ENCODE measurements at regions of chr17 and their contacts with region 1.

Region 1: DNA sequence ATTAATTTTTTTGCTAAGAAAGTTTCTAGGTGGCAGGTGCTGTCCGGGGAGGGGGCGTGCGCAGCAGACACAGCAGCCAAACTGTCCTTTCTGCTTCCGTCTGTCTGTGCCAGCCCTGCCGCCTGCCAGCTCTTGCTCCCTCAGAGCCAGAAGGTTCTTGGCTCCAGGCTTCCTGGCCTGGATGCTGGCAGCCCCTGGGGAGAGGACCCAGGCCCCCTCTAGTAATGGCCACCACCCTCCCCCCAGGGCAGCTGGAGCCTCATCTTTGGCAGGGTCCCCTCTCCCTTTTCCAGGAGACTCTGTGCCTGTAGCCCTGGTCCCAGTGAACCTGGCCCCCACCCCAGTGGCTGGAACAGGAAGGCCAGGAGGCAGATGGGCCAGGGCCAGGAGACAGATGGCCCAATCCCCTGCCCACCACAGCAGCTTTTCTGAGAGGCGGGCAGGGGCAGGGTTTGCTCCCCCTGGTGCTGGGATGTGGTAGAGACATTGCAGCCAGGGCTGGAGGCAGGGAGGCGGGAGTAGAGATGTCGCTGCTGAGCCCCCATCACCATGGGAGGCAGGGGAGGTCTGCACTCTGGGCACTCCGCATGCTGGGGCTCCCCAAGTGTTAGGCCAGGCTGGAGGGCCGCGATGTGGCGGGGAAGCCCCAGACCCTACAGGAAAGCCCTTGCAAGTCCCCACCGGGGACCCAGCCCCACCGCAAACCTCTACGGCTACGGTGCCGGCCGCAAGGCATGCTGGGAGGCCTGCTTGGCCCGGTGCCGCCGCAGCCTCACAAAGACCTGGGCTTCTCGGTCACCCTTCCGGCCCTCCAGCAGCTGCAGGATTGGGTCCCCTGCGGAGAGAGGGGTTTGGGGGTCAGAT is 16.7 kb downstream of the UNC13D start:
- DNase-seq: peak; percentile 91
- ATAC-seq: peak; percentile 74
- H3K4me3 Mint-ChIP-seq: peak overlapping the region; percentile 47
- H3K27ac Mint-ChIP-seq: peak overlapping the region; percentile 63; the same call in 1 of the 2 replicates
- H3K4me1 Mint-ChIP-seq: peaks cover 27% of the 10 kb centered on the region
- H3K27me3 Mint-ChIP-seq: no peaks in the 10 kb centered on the region
- CTCF ChIP-seq: peak; percentile 71

Region 2: DNA sequence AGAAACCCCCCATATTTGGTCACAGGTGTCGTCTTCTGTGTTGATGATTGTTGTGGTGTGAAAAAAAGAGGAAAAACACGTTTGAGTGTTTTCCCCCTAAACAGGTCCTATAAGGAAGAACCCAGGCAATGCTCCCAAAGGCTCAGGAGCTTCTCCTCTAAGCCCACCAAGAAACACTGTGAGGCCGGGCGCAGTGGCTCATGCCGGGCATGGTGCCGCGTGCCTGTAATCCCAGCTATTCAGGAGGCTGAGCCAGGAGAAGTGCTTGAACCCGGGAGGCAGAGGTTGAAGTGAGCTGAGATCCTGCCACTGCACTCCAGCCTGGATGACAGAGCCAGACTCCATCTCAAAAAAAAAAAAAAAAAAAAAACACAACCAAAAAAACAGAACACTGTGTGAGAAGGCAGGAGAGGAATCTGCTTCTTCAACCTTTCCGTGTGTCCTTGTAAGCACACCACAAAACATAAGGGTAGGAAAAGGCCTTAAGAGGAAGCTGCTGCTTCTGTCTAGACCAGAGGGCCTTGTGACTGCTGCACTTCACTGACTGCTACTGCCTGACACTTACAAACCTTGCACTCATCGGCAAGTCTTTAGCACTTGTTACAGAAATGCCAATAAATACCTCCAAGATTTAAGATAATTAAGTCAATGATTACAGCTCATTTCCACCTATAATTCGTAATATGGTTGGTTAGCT is 682.5 kb before region 1 on chr17:
- CTCF ChIA-PET with region 1: no interaction called
- POLR2A ChIA-PET with region 1: no interaction called
- DNase-seq: no peak
- ATAC-seq: no peak
- H3K4me3 Mint-ChIP-seq: no peak overlapping the region
- H3K27ac Mint-ChIP-seq: peak overlapping the region; percentile 60; the same call in 1 of the 2 replicates
- H3K4me1 Mint-ChIP-seq: peaks cover 4% of the 10 kb centered on the region
- H3K27me3 Mint-ChIP-seq: no peaks in the 10 kb centered on the region
- CTCF ChIP-seq: no peak

Region 3: DNA sequence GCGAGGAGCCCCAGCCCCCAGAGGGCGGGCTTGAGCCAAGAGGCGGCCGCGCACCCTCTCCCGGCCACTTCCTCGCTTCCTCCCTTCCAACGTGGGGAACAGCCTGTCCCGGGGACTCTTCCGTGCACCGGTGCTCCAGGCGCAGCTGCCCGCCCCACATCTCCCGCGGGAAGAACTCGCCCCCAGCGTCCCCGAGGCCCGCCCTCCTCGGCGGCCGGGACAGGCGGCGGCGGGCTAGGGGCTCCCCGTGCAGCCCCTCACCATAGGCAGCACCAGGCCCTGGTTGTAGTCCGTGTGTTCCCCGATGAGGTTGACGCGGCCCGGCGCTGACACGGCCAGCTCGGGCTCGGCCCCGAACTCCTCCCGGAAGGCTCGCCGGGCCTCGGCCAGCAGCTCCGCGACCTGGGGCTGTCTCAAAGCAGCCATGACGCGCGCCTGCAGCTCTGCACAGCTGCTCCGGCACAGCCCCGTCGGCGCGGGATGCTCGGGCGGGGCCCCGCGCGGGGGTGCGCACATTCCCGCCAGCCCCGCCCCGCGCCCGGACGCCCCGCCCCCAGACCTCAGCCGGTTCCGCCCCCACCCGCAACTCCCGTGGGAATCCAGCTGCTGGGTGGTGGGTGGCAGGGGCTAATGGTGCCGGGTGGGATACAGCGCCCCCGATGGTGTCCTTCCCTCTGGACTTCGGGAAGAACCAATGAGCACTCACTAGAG is 62.6 kb before region 1 on chr17 and contains the start of gene GALK1:
- CTCF ChIA-PET with region 1: interaction called, 38 read pairs
- POLR2A ChIA-PET with region 1: no interaction called
- DNase-seq: peak; percentile 67
- ATAC-seq: peak; percentile 76
- H3K4me3 Mint-ChIP-seq: peak within 1 kb of the TSS; percentile 75
- H3K27ac Mint-ChIP-seq: peak within 1 kb of the TSS; percentile 92
- H3K4me1 Mint-ChIP-seq: peaks cover 9% of the 10 kb centered on the region
- H3K27me3 Mint-ChIP-seq: no peaks in the 10 kb centered on the region
- CTCF ChIP-seq: no peak
- total RNA-seq, gene GALK1: 42.2 to 49.9 TPM (median 49.4 TPM) in 3 replicates

Region 4: GRCh38 chr17:75784473-75785015 is 42.9 kb before region 1 on chr17 and contains the start of gene UNK:
- CTCF ChIA-PET with region 1: interaction called, 27 read pairs
- POLR2A ChIA-PET with region 1: interaction called, 4 read pairs
- DNase-seq: peak; percentile 97
- ATAC-seq: peak; percentile 77
- H3K4me3 Mint-ChIP-seq: peak within 1 kb of the TSS; percentile 95
- H3K27ac Mint-ChIP-seq: peak within 1 kb of the TSS; percentile 100
- H3K4me1 Mint-ChIP-seq: peaks cover 34% of the 10 kb centered on the region
- H3K27me3 Mint-ChIP-seq: peaks cover 3% of the 10 kb centered on the region
- CTCF ChIP-seq: no peak
- total RNA-seq, gene UNK: 35.0 to 37.8 TPM (median 35.4 TPM) in 3 replicates

Region 5: GRCh38 chr17:75845049-75845860 is 17.8 kb after region 1 on chr17:
- CTCF ChIA-PET with region 1: interaction called, 180 read pairs
- POLR2A ChIA-PET with region 1: interaction called, 4 read pairs
- DNase-seq: peak; percentile 88
- ATAC-seq: peak; percentile 90
- H3K4me3 Mint-ChIP-seq: no peak overlapping the region
- H3K27ac Mint-ChIP-seq: peak overlapping the region; percentile 90
- H3K4me1 Mint-ChIP-seq: peaks cover 21% of the 10 kb centered on the region
- H3K27me3 Mint-ChIP-seq: no peaks in the 10 kb centered on the region
- CTCF ChIP-seq: peak; percentile 82

Region 6: DNA sequence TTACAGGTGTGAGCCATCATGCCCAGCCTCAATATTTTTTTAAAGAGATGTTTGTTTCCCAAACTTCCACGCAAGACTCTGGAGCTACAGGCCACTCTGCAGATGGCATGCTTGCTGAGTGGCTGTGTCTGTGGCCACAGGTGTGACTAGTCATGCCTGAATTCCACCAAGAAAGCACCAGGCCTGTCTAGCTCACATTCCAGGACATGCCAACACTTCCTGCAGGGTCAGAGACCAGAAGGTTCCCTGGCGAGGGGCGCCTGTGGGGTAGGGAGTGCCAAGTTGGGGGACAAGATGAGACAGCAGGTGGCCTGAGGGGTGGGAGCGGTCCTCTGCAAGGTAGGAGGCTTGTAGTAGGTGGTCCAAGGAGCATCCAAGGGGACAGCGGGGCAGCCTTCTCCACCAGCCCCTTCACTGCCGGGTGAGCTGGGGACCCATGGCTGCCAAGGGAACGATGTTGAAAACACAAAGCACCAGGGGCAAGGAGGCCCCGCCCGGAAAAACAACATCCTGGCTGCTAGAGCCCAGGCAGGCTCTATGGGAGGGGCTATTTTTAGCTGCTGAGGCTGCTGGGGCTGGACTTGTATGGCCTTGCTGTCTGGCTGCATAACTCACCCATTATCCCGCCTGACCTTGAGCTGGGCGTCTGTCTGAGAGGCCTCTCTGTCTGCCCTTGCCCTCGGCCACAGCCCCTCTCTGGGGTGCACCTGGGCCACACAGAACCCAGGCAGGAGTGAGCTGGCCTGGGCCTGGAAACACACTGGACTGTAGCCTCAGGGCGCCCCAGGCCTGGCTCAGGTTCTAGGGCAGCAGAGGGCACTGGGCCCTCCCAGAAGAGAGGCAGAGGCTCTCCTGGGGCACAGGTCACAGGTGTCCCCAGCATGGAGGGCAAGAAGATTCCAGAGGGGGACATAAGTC is 45.2 kb after region 1 on chr17:
- CTCF ChIA-PET with region 1: interaction called, 22 read pairs
- POLR2A ChIA-PET with region 1: no interaction called
- DNase-seq: no peak
- ATAC-seq: peak; percentile 12
- H3K4me3 Mint-ChIP-seq: no peak overlapping the region
- H3K27ac Mint-ChIP-seq: no peak overlapping the region
- H3K4me1 Mint-ChIP-seq: peaks cover 36% of the 10 kb centered on the region
- H3K27me3 Mint-ChIP-seq: peaks cover 14% of the 10 kb centered on the region
- CTCF ChIP-seq: no peak

Region 7: GRCh38 chr17:75904749-75905521 is 77.5 kb after region 1 on chr17 and contains the start of gene MRPL38:
- CTCF ChIA-PET with region 1: interaction called, 13 read pairs
- POLR2A ChIA-PET with region 1: no interaction called
- DNase-seq: peak; percentile 96
- ATAC-seq: peak; percentile 98
- H3K4me3 Mint-ChIP-seq: peak within 1 kb of the TSS; percentile 98
- H3K27ac Mint-ChIP-seq: peak within 1 kb of the TSS; percentile 95
- H3K4me1 Mint-ChIP-seq: peaks cover 3% of the 10 kb centered on the region; the same call in 1 of the 2 replicates
- H3K27me3 Mint-ChIP-seq: no peaks in the 10 kb centered on the region
- CTCF ChIP-seq: peak; percentile 97
- total RNA-seq, gene MRPL38: 107 to 146 TPM (median 116 TPM) in 3 replicates

Region 8: GRCh38 chr17:76111956-76112355 is 284.5 kb after region 1 on chr17:
- CTCF ChIA-PET with region 1: no interaction called
- POLR2A ChIA-PET with region 1: no interaction called
- DNase-seq: no peak
- ATAC-seq: no peak
- H3K4me3 Mint-ChIP-seq: no peak overlapping the region
- H3K27ac Mint-ChIP-seq: no peak overlapping the region
- H3K4me1 Mint-ChIP-seq: peaks cover 3% of the 10 kb centered on the region; the same call in 1 of the 2 replicates
- H3K27me3 Mint-ChIP-seq: no peaks in the 10 kb centered on the region
- CTCF ChIP-seq: no peak

Measured in WTC11 (cell line).